HEK293T (cell line): ENCODE measurements at regions of chr13 and their contacts with region 1.

Region 1: DNA sequence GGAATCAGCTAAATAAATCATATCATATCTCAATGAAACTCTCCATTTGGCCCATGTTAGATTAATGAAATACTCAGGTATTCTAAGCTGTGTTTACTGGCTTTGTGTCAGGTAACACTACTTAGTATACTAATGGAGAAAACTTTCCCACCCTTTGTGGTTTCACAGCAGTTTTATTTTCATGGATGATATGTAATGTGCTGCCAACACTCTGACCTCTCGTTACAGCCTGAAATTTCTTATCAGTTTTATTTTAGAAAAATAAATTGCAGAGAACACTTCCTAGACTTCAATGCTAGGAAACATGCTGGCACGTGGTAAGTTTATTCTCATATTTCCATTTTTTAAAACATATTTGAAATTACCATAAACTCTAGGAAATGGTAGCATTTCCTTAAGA is 758.9 kb downstream of the LIG4 start:
- DNase-seq: no peak

Region 2: GRCh38 chr13:105552078-105552477 is 1904.4 kb before region 1 on chr13:
- CTCF ChIA-PET with region 1: no interaction called
- POLR2A ChIA-PET with region 1: no interaction called
- DNase-seq: no peak

Region 3: GRCh38 chr13:107291875-107292274 is 164.6 kb before region 1 on chr13:
- CTCF ChIA-PET with region 1: interaction called, 11 read pairs
- POLR2A ChIA-PET with region 1: no interaction called
- DNase-seq: no peak